ENCODE measurements at regions of chr4 and their contacts with region 1.

Region 1: DNA sequence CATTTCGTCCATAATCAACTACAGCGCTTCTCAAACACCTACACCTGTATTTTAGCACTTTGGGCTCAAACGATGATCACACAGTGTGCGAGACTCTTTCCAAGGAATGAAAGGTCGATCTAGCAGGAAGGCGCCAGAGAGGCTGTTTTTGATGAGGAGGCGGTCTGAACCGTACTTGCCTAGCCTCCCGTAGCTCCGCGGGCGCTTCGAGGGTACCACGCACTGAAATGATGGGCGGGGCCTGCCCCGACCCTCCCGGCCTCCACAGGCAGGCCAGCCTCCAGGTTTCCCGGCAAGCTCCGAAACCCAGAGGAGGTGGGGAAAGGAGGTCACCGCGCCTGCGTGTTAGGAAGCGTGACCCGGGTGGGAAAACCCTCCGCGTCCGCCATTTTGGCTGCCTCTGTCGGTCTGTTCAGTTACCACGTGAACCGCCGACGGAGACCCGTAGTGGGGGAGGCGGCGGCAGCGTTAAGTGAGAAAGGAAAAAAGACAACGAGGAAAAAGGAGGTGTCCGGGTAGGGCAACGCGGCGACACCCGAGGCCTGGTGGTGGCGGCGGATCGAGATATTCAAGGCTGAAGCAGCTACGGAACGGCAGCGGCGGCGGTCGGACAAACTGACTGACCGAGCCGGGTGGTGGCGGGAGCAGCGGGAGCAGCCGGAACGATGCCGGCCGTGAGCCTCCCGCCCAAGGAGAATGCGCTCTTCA is at the start of gene NAA15:
- DNase-seq: peak; percentile 96
- H3K4me3 ChIP-seq: peak within 1 kb of the TSS; percentile 92 to 93
- H3K27ac ChIP-seq: peak within 1 kb of the TSS; percentile 81 to 89
- H3K4me1 ChIP-seq: peaks cover 5% of the 10 kb centered on the region
- H3K27me3 ChIP-seq: no peaks in the 10 kb centered on the region
- CTCF ChIP-seq: peak in 2 of 4 experiments; percentile 8 to 11
- POLR2A ChIP-seq: peak; percentile 88
- total RNA-seq, gene NAA15: 19.3 to 22.9 TPM

Region 2: GRCh38 chr4:138992676-138993075 is 308.6 kb before region 1 on chr4:
- intact Hi-C with region 1: no loop called
- DNase-seq: no peak
- H3K4me3 ChIP-seq: no peak overlapping the region
- H3K27ac ChIP-seq: no peak overlapping the region
- H3K4me1 ChIP-seq: no peaks in the 10 kb centered on the region
- H3K27me3 ChIP-seq: no peaks in the 10 kb centered on the region
- CTCF ChIP-seq: no peak
- POLR2A ChIP-seq: no peak

Region 3: GRCh38 chr4:139361301-139361700 is 60.0 kb after region 1 on chr4:
- intact Hi-C with region 1: no loop called
- DNase-seq: no peak
- H3K4me3 ChIP-seq: no peak overlapping the region
- H3K27ac ChIP-seq: no peak overlapping the region
- H3K4me1 ChIP-seq: no peaks in the 10 kb centered on the region
- H3K27me3 ChIP-seq: no peaks in the 10 kb centered on the region
- CTCF ChIP-seq: no peak
- POLR2A ChIP-seq: no peak

Region 4: GRCh38 chr4:139453371-139454110 is 152.3 kb after region 1 on chr4:
- intact Hi-C with region 1: loop called (anchors 5 kb)
- DNase-seq: peak; percentile 97
- H3K4me3 ChIP-seq: peak overlapping the region; percentile 64 to 81
- H3K27ac ChIP-seq: peak overlapping the region; percentile 97 to 98
- H3K4me1 ChIP-seq: peaks cover 4% of the 10 kb centered on the region
- H3K27me3 ChIP-seq: no peaks in the 10 kb centered on the region
- CTCF ChIP-seq: peak in 1 of 4 experiments; percentile 32
- POLR2A ChIP-seq: peak; percentile 89